ENCODE measurements at regions of chr4 and their contacts with region 1.

Region 1: GRCh38 chr4:102554992-102555391 is 53.8 kb downstream of the NFKB1 start:
- DNase-seq: no peak
- ATAC-seq: peak; percentile 59 to 67

Region 2: DNA sequence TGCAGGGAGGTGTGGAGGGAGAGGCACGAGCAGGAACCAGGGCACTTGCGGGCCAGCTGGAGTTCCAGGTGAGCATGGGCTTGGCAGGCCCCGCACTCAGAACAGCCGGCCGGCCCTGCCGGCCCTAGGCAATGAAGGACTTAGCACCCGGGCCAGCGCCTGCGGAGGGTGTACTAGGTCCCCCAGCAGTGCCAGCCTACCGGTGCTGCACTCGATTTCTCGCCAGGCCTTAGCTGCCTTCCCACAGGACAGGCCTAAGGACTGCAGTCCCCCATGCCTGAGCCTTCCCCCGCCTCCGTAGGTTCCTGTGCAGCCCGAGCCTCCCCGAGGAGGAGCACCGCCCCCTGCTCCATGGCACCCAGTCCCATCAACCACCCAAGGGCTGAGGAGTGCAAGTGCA is 71.9 kb before region 1 on chr4:
- intact Hi-C with region 1: no loop called
- DNase-seq: no peak
- ATAC-seq: no peak

Region 3: GRCh38 chr4:102500696-102501446 is 54.1 kb before region 1 on chr4 and contains the start of gene NFKB1:
- intact Hi-C with region 1: loop called in 1 of 2 experiments (anchors 5 kb)
- DNase-seq: peak; percentile 78
- ATAC-seq: peak; percentile 60 to 64
- total RNA-seq, gene NFKB1: 23.7 to 25.6 TPM

Measured in left cardiac atrium (tissue), 4 donors.